Heart right ventricle (tissue), 16 donors: ENCODE measurements at regions of chr6 and their contacts with region 1.

Region 1: DNA sequence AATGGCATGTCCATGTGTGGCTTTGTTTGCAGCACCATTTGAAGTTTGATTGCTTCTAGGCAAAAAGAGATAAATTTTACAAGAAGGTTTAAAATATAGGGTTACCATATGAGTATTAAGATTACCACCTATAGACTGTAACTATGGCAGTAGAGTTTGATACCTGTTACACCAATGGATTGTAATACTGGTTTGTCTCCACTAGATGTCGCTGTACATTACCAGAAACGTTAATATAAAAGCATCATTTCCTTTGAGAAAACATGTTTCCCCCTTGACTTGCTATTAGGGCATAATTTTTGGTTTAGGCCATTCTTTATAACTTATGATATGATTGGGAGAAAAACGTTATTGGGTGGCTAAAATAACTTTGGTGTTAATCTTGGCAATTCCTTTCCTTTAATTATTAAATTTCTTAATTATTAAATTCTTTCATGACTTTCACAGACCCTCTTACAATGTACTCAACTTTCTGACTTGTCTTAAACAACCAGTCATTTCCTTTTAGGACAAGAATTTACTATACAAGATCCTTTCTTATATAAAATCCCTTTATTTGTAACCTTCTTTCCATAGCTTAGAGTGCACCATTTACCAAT is 42.8 kb downstream of the HLA-DPB1 start:
- DNase-seq: peak in 1 of 2 donors; percentile 23
- ATAC-seq: peak in 2 of 8 donors; percentile 29 to 34
- H3K4me3 ChIP-seq: no peak overlapping the region
- H3K27ac ChIP-seq: no peak overlapping the region
- H3K4me1 ChIP-seq: peaks cover 0 to 25% (median 4%) of the 10 kb centered on the region in 9 donors
- H3K27me3 ChIP-seq: peaks cover 0 to 60% (median 43%) of the 10 kb centered on the region in 7 donors
- CTCF ChIP-seq: peak; percentile 75 to 91 (median 87)

Region 2: GRCh38 chr6:33154349-33154748 is 35.7 kb after region 1 on chr6:
- intact Hi-C with region 1: loop called in 1 of 10 experiments (anchors 5 kb)
- DNase-seq: no peak
- ATAC-seq: no peak
- H3K4me3 ChIP-seq: no peak overlapping the region
- H3K27ac ChIP-seq: no peak overlapping the region
- H3K4me1 ChIP-seq: no peaks in the 10 kb centered on the region
- H3K27me3 ChIP-seq: peaks cover 0 to 15% (median 12%) of the 10 kb centered on the region in 7 donors
- CTCF ChIP-seq: no peak

Region 3: GRCh38 chr6:33454009-33454946 is 335.7 kb after region 1 on chr6 and contains the start of gene ZBTB9:
- intact Hi-C with region 1: no loop called
- DNase-seq: peak; percentile 95 to 96
- ATAC-seq: peak; percentile 99 to 100 (median 99)
- H3K4me3 ChIP-seq: peak within 1 kb of the TSS; percentile 61 to 97 (median 81)
- H3K27ac ChIP-seq: peak within 1 kb of the TSS in 9 of 10 donors; percentile 72 to 90 (median 87)
- H3K4me1 ChIP-seq: peaks cover 4 to 42% (median 17%) of the 10 kb centered on the region in 9 donors
- H3K27me3 ChIP-seq: no peaks in the 10 kb centered on the region
- CTCF ChIP-seq: no peak
- total RNA-seq, gene ZBTB9: 2.7 to 6.5 (median 4.9) TPM